Activated T-helper 1 cell treated with anti-CD3 and anti-CD28 coated beads, Interleukin-12 subunit alpha, Interleukin-12 subunit beta, Interleukin-2, Interleukin-4 antibody, amounts not matched to agents 30 ng/mL and 10 ng/mL and 1 ng/mL, durations not matched to agents 14 hours and 24 hours and 36 hours (primary cell): ENCODE measurements at regions of chr6 and their contacts with region 1.

Region 1: DNA sequence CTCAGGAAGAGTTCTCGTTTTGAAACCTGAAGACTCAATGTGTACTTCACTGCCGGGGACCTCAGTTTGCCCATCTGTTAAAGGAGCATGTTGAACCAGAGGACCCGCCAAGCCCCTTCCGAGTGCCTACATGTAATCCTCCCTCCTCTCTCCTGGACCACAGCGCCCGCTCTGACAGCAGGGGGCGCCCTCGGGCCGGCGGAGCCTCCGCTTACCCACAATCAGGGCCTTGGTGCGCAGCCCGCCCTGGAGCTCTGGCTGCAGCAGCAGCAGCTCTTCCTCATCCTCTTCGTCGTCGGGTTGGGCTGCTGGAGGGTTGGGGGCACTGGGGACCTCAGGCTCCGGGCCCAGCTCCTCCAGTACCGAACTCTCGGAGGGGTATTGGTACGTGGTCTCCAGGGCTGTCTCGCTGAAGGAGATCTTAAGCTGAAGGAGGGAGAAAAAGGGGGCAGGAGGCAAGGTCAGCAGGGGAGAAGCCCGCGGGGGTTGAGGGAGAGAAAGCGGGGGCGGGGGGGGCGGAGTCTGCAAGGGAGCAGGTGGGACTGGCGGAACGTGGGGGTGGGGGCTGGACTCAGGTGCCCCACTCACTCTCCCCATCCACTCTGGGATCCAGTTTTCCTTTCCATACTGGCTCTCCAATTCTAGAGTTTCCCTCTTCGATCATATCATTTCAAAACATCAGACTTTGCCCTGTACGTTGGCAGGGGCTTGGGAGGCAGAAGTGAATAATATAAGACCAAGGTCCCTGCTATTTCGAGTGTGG is 6.3 kb upstream of the DHX16 start:
- DNase-seq: peak; percentile 85
- H3K4me3 Mint-ChIP-seq: peak overlapping the region; percentile 94
- H3K27ac Mint-ChIP-seq: peak overlapping the region; percentile 90
- H3K4me1 Mint-ChIP-seq: peaks cover 26% of the 10 kb centered on the region
- H3K27me3 Mint-ChIP-seq: no peaks in the 10 kb centered on the region

Region 2: DNA sequence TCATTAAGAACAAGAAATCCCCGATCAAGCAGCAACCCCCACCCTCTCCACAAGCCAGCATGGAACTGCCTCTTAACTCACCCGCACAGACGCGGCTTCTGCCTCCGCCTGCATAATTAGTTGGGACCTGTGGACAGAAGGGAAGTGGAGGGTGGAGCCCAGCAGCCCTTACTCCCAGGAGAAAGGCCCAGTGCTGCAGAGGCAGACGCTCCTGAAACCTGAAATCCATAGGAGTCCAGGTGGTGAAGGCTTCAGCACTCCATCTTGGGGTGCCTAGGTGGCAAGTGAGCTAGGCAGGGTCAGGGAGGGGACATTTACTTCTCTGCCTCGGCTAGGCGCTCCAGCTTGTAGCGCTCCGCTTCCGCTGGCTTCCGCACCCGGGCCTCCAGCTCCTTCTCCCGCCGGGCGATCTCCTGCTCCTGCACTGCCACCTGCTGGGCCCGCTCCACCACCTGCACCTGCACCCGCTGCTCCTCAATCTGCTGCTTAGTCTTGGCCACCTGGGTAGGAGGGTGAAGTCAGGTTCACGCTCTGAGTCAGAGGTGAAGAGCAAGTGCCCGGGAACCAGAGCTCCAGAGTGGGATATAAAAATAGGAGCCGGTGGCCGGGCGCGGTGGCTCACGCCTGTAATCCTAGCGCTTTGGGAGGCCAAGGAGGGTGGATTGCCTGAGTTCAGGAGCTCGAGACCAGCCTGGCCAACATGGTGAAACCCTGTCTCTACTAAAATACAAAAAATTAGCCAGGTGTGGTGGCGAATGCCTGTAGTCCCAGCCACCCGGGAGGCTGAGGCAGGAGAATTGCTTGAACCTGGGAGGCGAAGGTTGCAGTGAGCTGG is 51.7 kb after region 1 on chr6:
- intact Hi-C with region 1: no loop called
- DNase-seq: peak; percentile 79
- H3K4me3 Mint-ChIP-seq: peak overlapping the region; percentile 19
- H3K27ac Mint-ChIP-seq: peak overlapping the region; percentile 55
- H3K4me1 Mint-ChIP-seq: peaks cover 51% of the 10 kb centered on the region
- H3K27me3 Mint-ChIP-seq: no peaks in the 10 kb centered on the region

Region 3: DNA sequence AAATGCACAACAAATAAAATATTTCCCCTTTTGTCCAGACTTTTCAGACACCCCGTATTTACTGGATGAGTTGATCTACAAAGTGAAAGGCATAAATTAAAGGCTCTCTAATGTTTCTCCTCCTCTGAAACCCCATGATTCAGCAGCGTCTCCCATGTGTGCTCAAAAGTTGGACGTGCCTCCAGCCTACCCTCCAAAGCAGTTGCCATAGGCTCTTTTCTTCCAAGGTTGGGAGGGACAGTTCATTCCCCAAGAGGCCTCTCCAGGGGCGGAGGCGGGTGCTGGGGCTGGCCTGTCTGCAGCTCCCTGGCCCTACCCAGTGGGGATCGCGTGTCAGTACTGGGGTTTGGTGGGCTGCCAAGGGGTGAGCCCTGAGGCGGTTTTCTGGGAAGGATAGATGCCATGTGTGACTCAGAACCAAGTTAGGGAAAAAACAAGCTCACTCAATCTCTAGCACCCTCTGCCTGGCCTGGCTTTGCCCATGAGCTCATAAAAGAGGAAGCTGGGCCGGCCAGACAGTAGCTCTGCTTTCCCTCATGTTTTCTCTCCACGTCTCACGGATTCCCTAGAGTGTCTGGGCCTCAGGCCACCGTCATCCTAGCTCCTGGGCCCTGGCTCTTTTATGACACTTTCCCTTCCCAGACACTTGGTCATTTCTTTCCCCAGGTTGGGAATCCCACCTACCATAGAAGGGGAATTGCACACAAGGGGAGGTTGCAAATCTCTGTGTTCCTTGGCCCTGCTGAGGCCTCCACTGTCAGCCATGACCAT is 73.2 kb after region 1 on chr6:
- intact Hi-C with region 1: no loop called
- DNase-seq: no peak
- H3K4me3 Mint-ChIP-seq: no peak overlapping the region
- H3K27ac Mint-ChIP-seq: peak overlapping the region; percentile 19
- H3K4me1 Mint-ChIP-seq: peaks cover 22% of the 10 kb centered on the region
- H3K27me3 Mint-ChIP-seq: peaks cover 1% of the 10 kb centered on the region

Region 4: DNA sequence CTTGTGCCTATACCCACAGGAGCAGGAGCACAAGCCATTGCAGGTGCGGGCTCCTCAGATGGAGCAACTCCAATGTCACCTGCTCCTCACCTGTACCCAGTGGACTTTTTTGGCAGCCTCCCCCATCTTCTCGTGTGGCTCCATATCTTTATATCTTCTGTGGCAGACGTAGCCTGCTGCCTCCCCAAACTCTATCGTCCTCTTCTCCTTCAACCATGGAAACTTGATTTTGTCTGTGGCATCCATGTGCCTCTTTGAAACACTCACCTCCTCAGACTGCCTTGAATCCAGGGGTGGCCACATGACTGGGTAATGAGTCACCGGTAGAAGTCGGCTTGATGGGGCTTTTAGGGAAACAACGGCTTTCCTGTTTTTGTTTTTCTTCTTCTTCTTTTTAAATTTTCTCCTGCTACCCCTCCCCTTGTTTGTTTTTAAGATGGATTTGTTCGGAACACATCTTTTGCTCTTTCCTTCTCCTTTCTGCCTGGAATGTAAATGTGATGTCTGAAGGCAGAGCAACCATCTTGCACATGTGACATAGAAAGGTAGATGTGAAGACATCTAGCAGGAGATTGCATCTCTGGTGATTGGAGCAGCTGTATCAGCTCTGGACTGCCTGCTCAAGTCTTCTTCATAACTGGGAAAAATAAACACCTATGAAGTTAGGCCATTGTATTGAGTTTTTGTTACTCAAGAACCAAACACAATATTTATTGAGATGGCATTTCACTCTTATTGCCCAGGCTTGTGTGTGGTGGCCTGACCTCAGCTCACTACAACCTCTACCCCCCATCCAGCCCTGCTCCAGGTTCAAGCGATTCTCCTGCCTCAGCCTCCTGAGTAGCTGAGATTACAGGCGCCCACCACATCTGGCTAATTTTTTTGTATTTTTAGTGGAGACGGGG is 135.2 kb after region 1 on chr6:
- intact Hi-C with region 1: loop called (anchors 1 kb)
- DNase-seq: peak; percentile 47
- H3K4me3 Mint-ChIP-seq: peak overlapping the region; percentile 72
- H3K27ac Mint-ChIP-seq: peak overlapping the region; percentile 99
- H3K4me1 Mint-ChIP-seq: peaks cover 86% of the 10 kb centered on the region
- H3K27me3 Mint-ChIP-seq: peaks cover 1% of the 10 kb centered on the region

Region 5: DNA sequence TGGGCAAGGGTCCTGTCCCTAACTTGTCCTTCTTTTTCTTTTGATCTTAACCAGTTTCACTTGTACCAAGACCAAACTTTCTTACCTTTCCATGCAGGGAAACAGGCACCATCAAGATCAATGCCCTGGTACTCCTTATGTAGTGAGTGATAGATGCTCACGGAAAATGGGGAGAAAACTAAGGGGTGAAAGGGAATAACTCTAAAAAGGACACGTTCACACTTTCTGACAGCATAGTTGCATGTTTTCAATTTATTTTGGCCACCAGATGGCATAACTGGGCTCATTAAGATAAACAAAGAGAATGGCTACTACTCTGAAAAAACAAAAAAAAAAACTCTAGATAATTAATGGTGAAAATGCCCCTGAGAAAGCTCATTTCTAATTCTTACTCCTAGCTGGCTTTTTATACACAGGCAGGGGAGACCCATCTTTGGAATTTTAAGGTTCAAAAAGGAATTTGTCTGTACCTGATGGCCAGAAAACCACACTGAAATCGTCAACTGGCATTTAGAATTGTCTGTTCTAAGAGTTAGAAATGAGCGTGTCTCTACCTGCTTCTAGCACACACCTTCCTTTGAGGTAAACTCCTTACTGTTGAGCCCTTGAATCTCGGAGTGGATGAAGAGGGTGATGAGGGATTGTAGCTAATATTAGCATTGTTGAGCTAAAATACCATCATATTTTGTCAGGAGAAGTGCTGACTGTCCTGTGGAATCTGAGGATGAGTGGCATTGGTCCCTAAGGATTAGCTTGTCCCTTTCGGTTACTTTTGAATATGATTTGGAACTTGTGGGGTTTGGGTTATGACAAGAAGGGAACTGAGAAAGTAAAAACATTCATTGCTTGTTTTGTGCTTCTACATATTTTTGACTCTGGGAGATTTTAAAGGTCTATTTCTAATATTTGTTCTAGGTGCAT is 143.0 kb after region 1 on chr6:
- intact Hi-C with region 1: loop called (anchors 1 kb)
- DNase-seq: no peak
- H3K4me3 Mint-ChIP-seq: no peak overlapping the region
- H3K27ac Mint-ChIP-seq: peak overlapping the region; percentile 29
- H3K4me1 Mint-ChIP-seq: peaks cover 71% of the 10 kb centered on the region
- H3K27me3 Mint-ChIP-seq: no peaks in the 10 kb centered on the region